K562 (cell line): ENCODE measurements at regions of chr1 and their contacts with region 1.

Region 1: GRCh38 chr1:149997585-149998262 is 12.8 kb downstream of the OTUD7B start:
- DNase-seq: no peak
- ATAC-seq: no peak
- H3K4me3 ChIP-seq: no peak overlapping the region
- H3K27ac ChIP-seq: no peak overlapping the region
- H3K4me1 ChIP-seq: peaks cover under 1 to 12% of the 10 kb centered on the region in 2 experiments; a peak in 4 of 5 replicates
- H3K27me3 ChIP-seq: no peaks in the 10 kb centered on the region
- CTCF ChIP-seq: no peak
- EP300 ChIP-seq: no peak
- POLR2A ChIP-seq: no peak
- RAD21 ChIP-seq: no peak

Region 2: GRCh38 chr1:149927503-149928387 is 70.0 kb before region 1 on chr1 and contains the start of gene SF3B4:
- CTCF ChIA-PET with region 1: no interaction called
- POLR2A ChIA-PET with region 1: no interaction called
- in situ Hi-C with region 1: no loop called
- intact Hi-C with region 1: no loop called
- DNase-seq: peak; percentile 89 to 96 (median 90)
- ATAC-seq: peak; percentile 99
- H3K4me3 ChIP-seq: peak within 1 kb of the TSS; percentile 93
- H3K27ac ChIP-seq: peak within 1 kb of the TSS; percentile 73
- H3K4me1 ChIP-seq: peaks cover 22 to 23% of the 10 kb centered on the region in 2 experiments
- H3K27me3 ChIP-seq: no peaks in the 10 kb centered on the region
- CTCF ChIP-seq: no peak
- EP300 ChIP-seq: no peak
- POLR2A ChIP-seq: peak; percentile 95
- RAD21 ChIP-seq: no peak
- polyA plus RNA-seq, gene SF3B4: 3.0 to 8.3 TPM

Region 3: GRCh38 chr1:150010393-150011115 is 12.8 kb after region 1 on chr1 and contains the start of gene OTUD7B:
- CTCF ChIA-PET with region 1: no interaction called
- POLR2A ChIA-PET with region 1: interaction called, 63 read pairs
- in situ Hi-C with region 1: no loop called
- intact Hi-C with region 1: no loop called
- DNase-seq: peak; percentile 89 to 95 (median 92)
- ATAC-seq: peak; percentile 84
- H3K4me3 ChIP-seq: peak within 1 kb of the TSS; percentile 81
- H3K27ac ChIP-seq: peak within 1 kb of the TSS; percentile 90
- H3K4me1 ChIP-seq: peaks cover 0 to 44% of the 10 kb centered on the region in 2 experiments; a peak in 3 of 5 replicates
- H3K27me3 ChIP-seq: no peaks in the 10 kb centered on the region
- CTCF ChIP-seq: no peak; a peak in 2 of 6 replicates
- EP300 ChIP-seq: peak; percentile 67
- POLR2A ChIP-seq: peak; percentile 80
- RAD21 ChIP-seq: no peak
- polyA plus RNA-seq, gene OTUD7B: 0.96 TPM